Motor neuron (in vitro differentiated cells): ENCODE measurements at regions of chr11 and their contacts with region 1.

Region 1: GRCh38 chr11:76919887-76920746 is 59.4 kb downstream of the ACER3 start:
- ATAC-seq: peak; percentile 32 to 88 (median 67)
- H3K4me3 ChIP-seq: no peak overlapping the region
- H3K27ac ChIP-seq: no peak overlapping the region
- H3K4me1 ChIP-seq: peaks cover 3 to 4% of the 10 kb centered on the region in 2 donors

Region 2: GRCh38 chr11:76744186-76745043 is 175.7 kb before region 1 on chr11:
- in situ Hi-C with region 1: loop called in 3 of 9 experiments (anchors 25 kb)
- ATAC-seq: peak in 1 of 8 experiments; percentile 34
- H3K4me3 ChIP-seq: no peak overlapping the region
- H3K27ac ChIP-seq: no peak overlapping the region
- H3K4me1 ChIP-seq: no peaks in the 10 kb centered on the region

Region 3: GRCh38 chr11:76807206-76807875 is 112.8 kb before region 1 on chr11:
- in situ Hi-C with region 1: loop called in 2 of 9 experiments (anchors 5 to 25 kb)
- ATAC-seq: peak; percentile 68 to 94 (median 90)
- H3K4me3 ChIP-seq: no peak overlapping the region
- H3K27ac ChIP-seq: no peak overlapping the region
- H3K4me1 ChIP-seq: no peaks in the 10 kb centered on the region

Region 4: DNA sequence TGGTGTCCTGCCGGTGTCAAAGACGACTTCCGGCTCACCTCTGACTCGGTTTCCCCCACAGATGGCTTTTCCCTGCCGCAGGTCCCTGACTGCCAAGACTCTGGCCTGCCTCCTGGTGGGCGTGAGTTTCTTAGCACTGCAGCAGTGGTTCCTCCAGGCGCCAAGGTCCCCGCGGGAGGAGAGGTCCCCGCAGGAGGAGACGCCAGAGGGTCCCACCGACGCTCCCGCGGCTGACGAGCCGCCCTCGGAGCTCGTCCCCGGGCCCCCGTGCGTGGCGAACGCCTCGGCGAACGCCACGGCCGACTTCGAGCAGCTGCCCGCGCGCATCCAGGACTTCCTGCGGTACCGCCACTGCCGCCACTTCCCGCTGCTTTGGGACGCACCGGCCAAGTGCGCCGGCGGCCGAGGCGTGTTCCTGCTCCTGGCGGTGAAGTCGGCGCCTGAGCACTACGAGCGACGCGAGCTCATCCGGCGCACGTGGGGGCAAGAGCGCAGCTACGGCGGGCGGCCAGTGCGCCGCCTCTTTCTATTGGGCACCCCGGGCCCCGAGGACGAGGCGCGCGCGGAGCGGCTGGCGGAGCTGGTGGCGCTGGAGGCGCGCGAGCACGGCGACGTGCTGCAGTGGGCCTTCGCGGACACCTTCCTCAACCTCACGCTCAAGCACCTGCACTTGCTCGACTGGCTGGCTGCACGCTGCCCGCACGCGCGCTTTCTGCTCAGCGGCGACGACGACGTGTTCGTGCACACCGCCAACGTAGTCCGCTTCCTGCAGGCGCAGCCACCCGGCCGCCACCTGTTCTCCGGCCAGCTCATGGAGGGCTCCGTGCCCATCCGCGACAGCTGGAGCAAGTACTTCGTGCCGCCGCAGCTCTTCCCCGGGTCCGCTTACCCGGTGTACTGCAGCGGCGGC is 119.6 kb after region 1 on chr11:
- in situ Hi-C with region 1: loop called in 2 of 9 experiments (anchors 10 to 25 kb)
- ATAC-seq: peak; percentile 42 to 90 (median 85)
- H3K4me3 ChIP-seq: peak overlapping the region; percentile 21 to 36 (median 31)
- H3K27ac ChIP-seq: no peak overlapping the region
- H3K4me1 ChIP-seq: no peaks in the 10 kb centered on the region

Region 5: DNA sequence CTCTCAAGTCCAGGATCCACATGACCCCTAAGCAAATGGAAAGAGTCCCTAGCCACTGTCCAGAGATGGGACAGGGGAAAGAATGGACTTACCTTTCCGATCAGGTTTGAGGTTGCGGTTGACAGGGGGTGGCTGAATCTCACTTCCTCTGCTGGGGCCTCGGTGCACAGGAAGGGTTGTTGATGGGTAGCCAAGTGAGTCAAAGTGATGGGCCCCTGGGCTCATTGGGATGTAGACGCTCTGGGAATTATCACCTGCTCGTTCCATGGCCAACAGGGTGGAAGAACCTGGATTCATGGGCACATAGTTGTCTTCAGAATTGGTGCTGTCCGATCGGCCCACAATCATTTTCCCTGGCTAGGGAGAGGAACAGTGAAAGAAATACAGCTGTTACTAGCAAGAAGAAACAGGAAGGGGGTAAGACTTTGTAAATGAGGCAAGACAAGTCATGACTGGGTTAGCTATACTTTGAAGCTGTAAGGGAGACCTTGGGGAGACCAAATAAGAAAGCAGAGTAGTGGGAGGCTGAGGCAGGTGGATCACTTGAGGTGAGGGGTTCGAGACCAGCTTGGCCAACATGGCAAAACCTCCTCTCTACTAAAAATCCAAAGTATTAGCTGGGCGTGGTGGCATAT is 1303.3 kb after region 1 on chr11:
- in situ Hi-C with region 1: no loop called
- ATAC-seq: no peak
- H3K4me3 ChIP-seq: no peak overlapping the region
- H3K27ac ChIP-seq: no peak overlapping the region
- H3K4me1 ChIP-seq: no peaks in the 10 kb centered on the region